Activated T-helper 1 cell treated with anti-CD3 and anti-CD28 coated beads, Interleukin-12 subunit alpha, Interleukin-12 subunit beta, Interleukin-2, Interleukin-4 antibody, amounts not matched to agents 30 ng/mL and 10 ng/mL and 1 ng/mL, durations not matched to agents 14 hours and 24 hours and 36 hours (primary cell): ENCODE measurements at regions of chr14 and their contacts with region 1.

Region 1: DNA sequence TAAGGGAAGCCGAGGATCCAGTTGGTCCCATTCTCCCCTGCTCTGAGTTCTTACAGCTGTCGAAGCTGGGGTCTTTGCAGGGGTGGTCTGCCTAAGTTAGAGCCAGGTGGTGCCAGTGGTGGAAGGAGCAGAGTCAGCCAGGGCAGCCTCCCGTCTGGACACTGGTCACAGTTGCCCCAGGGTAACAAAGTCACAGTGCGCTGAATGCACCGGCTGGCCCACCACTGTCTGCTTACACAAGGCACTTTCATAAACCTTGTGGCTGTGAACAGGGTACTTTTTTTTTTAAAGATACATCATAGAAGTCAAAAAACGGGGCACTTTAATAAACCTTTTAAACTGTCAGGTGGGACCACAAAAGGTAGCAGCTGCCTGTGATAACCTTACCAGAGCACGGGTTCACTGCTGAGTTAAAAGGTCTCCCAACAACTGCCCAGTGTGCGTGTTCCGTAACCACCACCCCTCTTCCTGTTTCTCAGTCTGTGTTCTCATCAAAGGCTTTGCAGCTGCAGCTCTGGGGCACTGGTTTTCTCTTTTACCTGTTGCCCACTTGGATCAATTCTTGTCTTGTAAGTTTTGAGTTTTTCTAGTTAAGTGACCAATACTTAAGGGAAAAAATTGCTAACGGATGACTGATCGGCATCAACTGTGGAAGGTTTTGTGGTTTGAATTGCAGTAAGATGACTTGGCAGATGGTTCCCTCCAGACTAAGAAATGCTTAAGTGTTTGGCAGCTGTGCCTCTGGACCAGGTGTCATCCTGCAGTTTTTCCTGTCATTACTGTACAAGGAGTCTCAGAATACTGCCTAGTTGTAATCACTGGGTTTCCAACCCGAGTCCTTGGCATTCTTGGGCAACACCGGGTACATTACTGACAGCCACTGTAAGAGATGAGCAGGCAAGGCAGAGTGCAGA is 55.9 kb downstream of the DYNC1H1 start:
- DNase-seq: peak; percentile 38
- H3K4me3 Mint-ChIP-seq: peak overlapping the region; percentile 32
- H3K27ac Mint-ChIP-seq: peak overlapping the region; percentile 76
- H3K4me1 Mint-ChIP-seq: peaks cover 20% of the 10 kb centered on the region
- H3K27me3 Mint-ChIP-seq: no peaks in the 10 kb centered on the region

Region 2: GRCh38 chr14:101767618-101768362 is 252.5 kb before region 1 on chr14:
- intact Hi-C with region 1: loop called (anchors 5 kb)
- DNase-seq: no peak
- H3K4me3 Mint-ChIP-seq: no peak overlapping the region
- H3K27ac Mint-ChIP-seq: no peak overlapping the region
- H3K4me1 Mint-ChIP-seq: peaks cover 36% of the 10 kb centered on the region
- H3K27me3 Mint-ChIP-seq: no peaks in the 10 kb centered on the region

Region 3: GRCh38 chr14:101876555-101876938 is 143.8 kb before region 1 on chr14:
- intact Hi-C with region 1: loop called (anchors 1 kb)
- DNase-seq: peak; percentile 46
- H3K4me3 Mint-ChIP-seq: peak overlapping the region; percentile 65
- H3K27ac Mint-ChIP-seq: peak overlapping the region; percentile 81
- H3K4me1 Mint-ChIP-seq: peaks cover 80% of the 10 kb centered on the region
- H3K27me3 Mint-ChIP-seq: no peaks in the 10 kb centered on the region

Region 4: GRCh38 chr14:102086972-102087761 is 66.9 kb after region 1 on chr14 and contains the start of gene HSP90AA1:
- intact Hi-C with region 1: loop called (anchors 1 kb)
- DNase-seq: peak; percentile 94
- H3K4me3 Mint-ChIP-seq: peak within 1 kb of the TSS; percentile 99
- H3K27ac Mint-ChIP-seq: peak within 1 kb of the TSS; percentile 97
- H3K4me1 Mint-ChIP-seq: peaks cover 63% of the 10 kb centered on the region
- H3K27me3 Mint-ChIP-seq: no peaks in the 10 kb centered on the region
- total RNA-seq, gene HSP90AA1: 993 and 995 TPM in 2 replicates

Region 5: GRCh38 chr14:102182190-102182589 is 161.9 kb after region 1 on chr14:
- intact Hi-C with region 1: loop called (anchors 1 kb)
- DNase-seq: no peak
- H3K4me3 Mint-ChIP-seq: no peak overlapping the region
- H3K27ac Mint-ChIP-seq: peak overlapping the region; percentile 68
- H3K4me1 Mint-ChIP-seq: peaks cover 50% of the 10 kb centered on the region
- H3K27me3 Mint-ChIP-seq: no peaks in the 10 kb centered on the region